Naive thymus-derived CD4-positive, alpha-beta T cell (primary cell): ENCODE measurements at regions of chr1 and their contacts with region 1.

Region 1: DNA sequence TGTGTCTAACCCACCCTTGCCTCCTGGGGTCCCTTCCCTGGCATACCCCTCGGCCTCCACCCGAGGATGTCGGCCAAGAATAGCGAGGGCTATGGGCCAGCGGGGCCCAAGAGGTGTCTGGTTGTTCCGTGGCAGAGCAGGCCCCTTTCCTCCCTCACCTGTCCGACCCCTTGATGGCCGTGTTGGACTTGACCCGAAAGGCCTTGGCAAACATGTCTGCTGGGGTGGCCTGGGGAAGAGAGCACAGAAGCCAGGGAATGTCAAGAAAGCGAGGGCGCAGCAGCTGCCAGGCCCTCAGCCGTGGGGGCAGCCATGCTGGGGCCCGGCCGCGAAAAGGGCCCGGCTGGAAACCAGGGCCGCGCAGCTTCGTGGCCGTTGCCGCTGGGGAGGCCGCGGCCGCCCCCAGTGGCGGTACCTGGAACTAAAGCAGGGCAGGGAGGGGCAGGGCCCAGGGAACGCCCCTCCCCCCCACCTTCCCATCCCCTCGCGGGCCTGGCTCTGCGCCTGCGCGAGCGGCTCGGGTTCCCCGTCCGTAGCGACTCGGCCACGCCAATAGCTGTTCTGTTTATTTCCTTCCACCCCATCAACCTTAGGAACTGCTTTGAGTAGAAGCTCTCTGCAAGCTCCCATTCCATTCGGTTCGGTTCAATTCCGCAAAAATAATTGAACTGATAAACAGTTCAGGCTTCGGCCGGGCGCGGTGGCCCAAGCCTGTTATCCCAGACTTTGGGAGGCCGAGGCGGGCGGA is at the start of gene EIF2D:
- DNase-seq: peak; percentile 88 to 98 (median 94)
- ATAC-seq: peak; percentile 100
- H3K4me3 ChIP-seq: peak within 1 kb of the TSS; percentile 97
- H3K4me3 Mint-ChIP-seq: peak within 1 kb of the TSS; percentile 89 to 95 (median 93)
- H3K27ac ChIP-seq: peak within 1 kb of the TSS; percentile 88
- H3K27ac Mint-ChIP-seq: peak within 1 kb of the TSS; percentile 92 to 99 (median 94)
- H3K4me1 ChIP-seq: peaks cover 8 to 10% of the 10 kb centered on the region in 2 donors
- H3K4me1 Mint-ChIP-seq: peaks cover 7 to 35% (median 30%) of the 10 kb centered on the region in 7 donors
- H3K27me3 ChIP-seq: no peaks in the 10 kb centered on the region
- H3K27me3 Mint-ChIP-seq: peaks cover 0 to 17% (median 0%) of the 10 kb centered on the region in 5 donors
- total RNA-seq, gene EIF2D: 38.7 to 73.0 (median 59.6) TPM

Region 2: GRCh38 chr1:206469933-206470691 is 142.2 kb before region 1 on chr1 and contains the start of gene IKBKE:
- CTCF ChIA-PET with region 1: no interaction called
- POLR2A ChIA-PET with region 1: interaction called, 3 read pairs
- intact Hi-C with region 1: loop called in 1 of 2 experiments (anchors 1 kb)
- DNase-seq: peak in 8 of 9 donors; percentile 37 to 58 (median 44)
- ATAC-seq: peak; percentile 74
- H3K4me3 ChIP-seq: peak within 1 kb of the TSS; percentile 98
- H3K4me3 Mint-ChIP-seq: peak within 1 kb of the TSS; percentile 88 to 95 (median 93)
- H3K27ac ChIP-seq: peak within 1 kb of the TSS; percentile 78
- H3K27ac Mint-ChIP-seq: peak within 1 kb of the TSS; percentile 75 to 97 (median 86)
- H3K4me1 ChIP-seq: peaks cover 64 to 66% of the 10 kb centered on the region in 2 donors
- H3K4me1 Mint-ChIP-seq: peaks cover 55 to 86% (median 78%) of the 10 kb centered on the region in 7 donors
- H3K27me3 ChIP-seq: no peaks in the 10 kb centered on the region
- H3K27me3 Mint-ChIP-seq: no peaks in the 10 kb centered on the region
- total RNA-seq, gene IKBKE: 50.1 to 177 (median 79.1) TPM

Region 3: DNA sequence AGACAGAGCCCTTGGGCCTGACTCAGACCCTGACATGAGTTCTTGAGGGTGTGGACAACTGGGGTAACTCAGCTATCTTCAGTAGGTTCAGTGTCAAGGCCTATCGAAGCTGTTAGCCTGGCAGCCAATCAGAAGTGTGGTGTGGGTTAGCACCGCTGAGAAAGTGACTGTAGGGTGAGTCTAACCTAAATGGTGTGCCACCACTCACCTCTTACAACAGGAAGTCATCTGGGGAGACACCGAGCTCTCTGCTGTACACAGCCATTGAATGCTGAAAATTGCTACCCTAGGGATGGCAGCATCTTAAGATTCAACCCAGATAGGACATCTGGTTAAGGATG is 60.3 kb before region 1 on chr1:
- CTCF ChIA-PET with region 1: interaction called, 5 read pairs
- POLR2A ChIA-PET with region 1: interaction called, 6 read pairs
- intact Hi-C with region 1: loop called (anchors 1 to 2 kb)
- DNase-seq: peak; percentile 44 to 87 (median 80)
- ATAC-seq: peak; percentile 93
- H3K4me3 ChIP-seq: peak overlapping the region; percentile 9
- H3K4me3 Mint-ChIP-seq: peak overlapping the region; percentile 5 to 82 (median 72)
- H3K27ac ChIP-seq: peak overlapping the region; percentile 69
- H3K27ac Mint-ChIP-seq: peak overlapping the region; percentile 86 to 98 (median 92)
- H3K4me1 ChIP-seq: peaks cover 51% of the 10 kb centered on the region in 2 donors
- H3K4me1 Mint-ChIP-seq: peaks cover 46 to 71% (median 54%) of the 10 kb centered on the region in 7 donors
- H3K27me3 ChIP-seq: no peaks in the 10 kb centered on the region
- H3K27me3 Mint-ChIP-seq: no peaks in the 10 kb centered on the region

Region 4: GRCh38 chr1:206583707-206584648 is 28.3 kb before region 1 on chr1:
- CTCF ChIA-PET with region 1: interaction called, 6 read pairs
- POLR2A ChIA-PET with region 1: no interaction called
- intact Hi-C with region 1: loop called in 1 of 2 experiments (anchors 1 kb)
- DNase-seq: peak; percentile 73 to 86 (median 80)
- ATAC-seq: peak; percentile 52
- H3K4me3 ChIP-seq: peak overlapping the region; percentile 11
- H3K4me3 Mint-ChIP-seq: peak overlapping the region; percentile 74 to 90 (median 82)
- H3K27ac ChIP-seq: peak overlapping the region; percentile 90
- H3K27ac Mint-ChIP-seq: peak overlapping the region; percentile 86 to 100 (median 93)
- H3K4me1 ChIP-seq: peaks cover 47 to 56% of the 10 kb centered on the region in 2 donors
- H3K4me1 Mint-ChIP-seq: peaks cover 42 to 92% (median 73%) of the 10 kb centered on the region in 7 donors
- H3K27me3 ChIP-seq: no peaks in the 10 kb centered on the region
- H3K27me3 Mint-ChIP-seq: no peaks in the 10 kb centered on the region

Region 5: GRCh38 chr1:206663832-206664652 is 51.7 kb after region 1 on chr1:
- CTCF ChIA-PET with region 1: interaction called, 17 read pairs
- POLR2A ChIA-PET with region 1: interaction called, 3 read pairs
- intact Hi-C with region 1: loop called (anchors 1 kb)
- DNase-seq: peak; percentile 44 to 83 (median 68)
- ATAC-seq: peak; percentile 87
- H3K4me3 ChIP-seq: no peak overlapping the region
- H3K4me3 Mint-ChIP-seq: peak overlapping the region in 4 of 10 donors; percentile 19 to 63 (median 41)
- H3K27ac ChIP-seq: no peak overlapping the region
- H3K27ac Mint-ChIP-seq: peak overlapping the region in 1 of 9 donors; percentile 15
- H3K4me1 ChIP-seq: peaks cover 0 to 9% of the 10 kb centered on the region in 2 donors
- H3K4me1 Mint-ChIP-seq: peaks cover 3 to 35% (median 9%) of the 10 kb centered on the region in 7 donors
- H3K27me3 ChIP-seq: peaks cover 0 to 6% of the 10 kb centered on the region in 2 donors
- H3K27me3 Mint-ChIP-seq: peaks cover 8 to 31% (median 21%) of the 10 kb centered on the region in 5 donors

Region 6: GRCh38 chr1:206808615-206809014 is 196.3 kb after region 1 on chr1:
- CTCF ChIA-PET with region 1: no interaction called
- POLR2A ChIA-PET with region 1: no interaction called
- intact Hi-C with region 1: loop called in 1 of 2 experiments (anchors 1 kb)
- DNase-seq: peak in 7 of 9 donors; percentile 47 to 71 (median 58)
- ATAC-seq: peak; percentile 90
- H3K4me3 ChIP-seq: no peak overlapping the region
- H3K4me3 Mint-ChIP-seq: peak overlapping the region in 1 of 10 donors; percentile 8
- H3K27ac ChIP-seq: no peak overlapping the region
- H3K27ac Mint-ChIP-seq: peak overlapping the region in 8 of 9 donors; percentile 17 to 76 (median 51)
- H3K4me1 ChIP-seq: peaks cover 30 to 42% of the 10 kb centered on the region in 2 donors
- H3K4me1 Mint-ChIP-seq: peaks cover 24 to 61% (median 52%) of the 10 kb centered on the region in 7 donors
- H3K27me3 ChIP-seq: no peaks in the 10 kb centered on the region
- H3K27me3 Mint-ChIP-seq: peaks cover 0 to 12% (median 0%) of the 10 kb centered on the region in 5 donors

Region 7: GRCh38 chr1:206935491-206936067 is 323.3 kb after region 1 on chr1:
- CTCF ChIA-PET with region 1: no interaction called
- POLR2A ChIA-PET with region 1: no interaction called
- intact Hi-C with region 1: no loop called
- DNase-seq: peak in 4 of 9 donors; percentile 28 to 56 (median 48)
- ATAC-seq: peak; percentile 68
- H3K4me3 ChIP-seq: no peak overlapping the region
- H3K4me3 Mint-ChIP-seq: no peak overlapping the region
- H3K27ac ChIP-seq: no peak overlapping the region
- H3K27ac Mint-ChIP-seq: peak overlapping the region in 1 of 9 donors; percentile 12
- H3K4me1 ChIP-seq: peaks cover 6 to 12% of the 10 kb centered on the region in 2 donors
- H3K4me1 Mint-ChIP-seq: peaks cover 2 to 31% (median 29%) of the 10 kb centered on the region in 7 donors
- H3K27me3 ChIP-seq: no peaks in the 10 kb centered on the region
- H3K27me3 Mint-ChIP-seq: peaks cover 0 to 8% (median 0%) of the 10 kb centered on the region in 5 donors

Region 8: GRCh38 chr1:207444514-207445217 is 832.4 kb after region 1 on chr1:
- CTCF ChIA-PET with region 1: no interaction called
- POLR2A ChIA-PET with region 1: no interaction called
- intact Hi-C with region 1: no loop called
- DNase-seq: no peak
- ATAC-seq: no peak
- H3K4me3 ChIP-seq: no peak overlapping the region
- H3K4me3 Mint-ChIP-seq: no peak overlapping the region
- H3K27ac ChIP-seq: no peak overlapping the region
- H3K27ac Mint-ChIP-seq: no peak overlapping the region
- H3K4me1 ChIP-seq: no peaks in the 10 kb centered on the region
- H3K4me1 Mint-ChIP-seq: no peaks in the 10 kb centered on the region
- H3K27me3 ChIP-seq: no peaks in the 10 kb centered on the region
- H3K27me3 Mint-ChIP-seq: peaks cover 0 to 39% (median 1%) of the 10 kb centered on the region in 5 donors